OCI-LY7 (cell line): ENCODE measurements at regions of chr7 and their contacts with region 1.

Region 1: GRCh38 chr7:101542527-101543241 is 86.4 kb downstream of the MYL10 start:
- DNase-seq: peak; percentile 76
- H3K4me3 ChIP-seq: no peak overlapping the region
- H3K27ac ChIP-seq: no peak overlapping the region
- H3K4me1 ChIP-seq: no peaks in the 10 kb centered on the region
- CTCF ChIP-seq: peak; percentile 92

Region 2: DNA sequence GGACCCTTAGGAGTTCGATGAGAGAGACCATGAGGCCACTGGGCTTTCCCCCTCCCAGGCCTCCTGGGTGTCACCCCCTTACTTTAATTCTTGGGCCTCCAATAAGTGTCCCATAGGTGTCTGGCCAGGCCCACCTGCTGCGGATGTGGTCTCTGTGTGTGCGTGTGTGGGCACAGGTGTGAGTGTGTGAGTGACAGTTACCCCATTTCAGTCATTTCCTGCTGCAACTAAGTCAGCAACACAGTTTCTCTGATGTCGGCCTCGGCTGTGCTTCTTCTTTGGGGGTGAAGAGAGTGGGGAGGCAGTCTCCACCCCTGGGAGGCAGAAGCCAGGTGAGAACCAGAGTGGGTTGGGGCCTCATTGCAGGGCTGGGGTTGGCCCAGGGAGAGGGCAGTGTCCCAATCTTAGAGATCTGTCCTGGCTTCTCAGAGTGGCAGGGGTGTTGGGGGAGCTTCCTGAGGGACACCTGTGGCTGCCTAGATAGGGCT is 1321.4 kb before region 1 on chr7:
- CTCF ChIA-PET with region 1: no interaction called
- POLR2A ChIA-PET with region 1: no interaction called
- intact Hi-C with region 1: no loop called
- DNase-seq: peak; percentile 98
- H3K4me3 ChIP-seq: peak overlapping the region; percentile 92
- H3K27ac ChIP-seq: peak overlapping the region; percentile 96
- H3K4me1 ChIP-seq: peaks cover 76% of the 10 kb centered on the region
- CTCF ChIP-seq: no peak

Region 3: DNA sequence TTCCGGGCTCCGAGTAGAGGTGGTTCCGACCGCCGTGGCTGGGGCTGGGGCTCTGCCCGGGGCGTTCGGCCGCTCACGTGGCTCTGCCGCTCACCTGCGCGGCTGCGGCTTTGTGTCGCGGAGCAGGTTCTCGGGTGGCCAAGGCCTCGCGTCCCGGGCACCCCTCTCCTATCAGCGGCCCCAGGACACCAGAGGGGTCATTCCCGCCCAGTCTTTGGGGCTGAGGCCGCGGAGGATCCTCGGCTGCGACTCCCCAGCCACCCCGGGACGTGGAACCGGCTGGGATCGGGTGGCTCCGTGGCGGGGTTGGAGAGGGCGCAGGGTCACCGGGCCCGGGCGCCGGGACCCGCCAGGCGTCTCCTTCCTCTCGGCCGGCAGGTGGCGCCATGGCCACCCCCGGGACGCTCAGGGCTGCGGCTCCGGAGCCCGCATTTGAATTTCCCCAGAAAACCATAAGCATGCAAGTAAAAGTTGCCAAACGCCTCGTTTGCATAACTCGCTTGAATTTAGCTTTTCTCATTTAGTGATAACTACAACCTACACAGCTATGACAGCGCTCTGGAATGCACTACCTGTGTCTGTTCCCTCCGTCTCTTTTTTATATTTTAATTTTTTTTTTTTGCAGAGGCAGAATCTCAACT is 178.8 kb before region 1 on chr7:
- CTCF ChIA-PET with region 1: no interaction called
- POLR2A ChIA-PET with region 1: no interaction called
- intact Hi-C with region 1: loop called (anchors 10 kb)
- DNase-seq: peak; percentile 61
- H3K4me3 ChIP-seq: no peak overlapping the region
- H3K27ac ChIP-seq: no peak overlapping the region
- H3K4me1 ChIP-seq: no peaks in the 10 kb centered on the region
- CTCF ChIP-seq: peak; percentile 83

Region 4: GRCh38 chr7:101602484-101603241 is 60.0 kb after region 1 on chr7:
- CTCF ChIA-PET with region 1: no interaction called
- POLR2A ChIA-PET with region 1: interaction called, 3 read pairs
- intact Hi-C with region 1: loop called (anchors 2 kb)
- DNase-seq: peak; percentile 85
- H3K4me3 ChIP-seq: no peak overlapping the region
- H3K27ac ChIP-seq: no peak overlapping the region
- H3K4me1 ChIP-seq: peaks cover 10% of the 10 kb centered on the region
- CTCF ChIP-seq: peak; percentile 98

Region 5: DNA sequence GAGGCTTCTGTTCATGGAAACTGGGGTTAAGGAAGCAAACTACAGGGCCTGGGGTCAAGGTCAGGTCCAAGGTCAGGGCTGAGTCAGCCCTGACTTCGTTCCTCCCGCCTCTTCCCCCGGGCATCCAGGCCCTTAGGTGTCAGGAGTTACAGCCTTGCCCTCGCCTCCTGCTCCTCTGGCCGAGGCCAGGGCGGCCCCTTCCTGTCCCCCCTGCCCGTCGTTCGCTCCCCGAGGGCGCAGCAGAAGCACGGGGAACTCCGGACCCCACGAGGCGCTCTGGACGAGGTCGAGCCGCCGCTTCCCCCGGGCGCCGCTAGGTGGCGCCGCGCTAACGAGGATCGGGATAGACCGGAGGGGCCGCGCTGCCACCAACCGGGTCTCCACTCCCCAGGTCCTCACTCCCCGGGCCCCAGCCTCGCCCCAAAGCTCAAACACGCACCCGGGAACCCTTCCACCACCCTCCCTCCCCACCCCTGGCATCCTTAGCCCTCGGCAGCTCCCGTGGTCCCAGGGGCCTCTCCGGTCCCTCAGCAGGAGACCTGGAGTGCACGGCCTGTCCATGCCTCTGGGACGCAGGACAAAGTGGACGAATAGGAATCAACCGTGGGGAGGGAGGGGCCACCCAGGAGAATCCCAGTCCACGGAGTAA is 145.6 kb after region 1 on chr7:
- CTCF ChIA-PET with region 1: no interaction called
- POLR2A ChIA-PET with region 1: no interaction called
- intact Hi-C with region 1: loop called (anchors 5 kb)
- DNase-seq: peak; percentile 88
- H3K4me3 ChIP-seq: peak overlapping the region; percentile 23
- H3K27ac ChIP-seq: peak overlapping the region; percentile 45
- H3K4me1 ChIP-seq: peaks cover 12% of the 10 kb centered on the region
- CTCF ChIP-seq: peak; percentile 92

Region 6: GRCh38 chr7:102272075-102272917 is 729.6 kb after region 1 on chr7:
- CTCF ChIA-PET with region 1: no interaction called
- POLR2A ChIA-PET with region 1: no interaction called
- intact Hi-C with region 1: loop called (anchors 1 kb)
- DNase-seq: peak; percentile 80
- H3K4me3 ChIP-seq: no peak overlapping the region
- H3K27ac ChIP-seq: no peak overlapping the region
- H3K4me1 ChIP-seq: peaks cover 17% of the 10 kb centered on the region
- CTCF ChIP-seq: peak; percentile 97

Region 7: GRCh38 chr7:102396027-102397019 is 853.6 kb after region 1 on chr7 and contains the start of gene PRKRIP1:
- CTCF ChIA-PET with region 1: no interaction called
- POLR2A ChIA-PET with region 1: no interaction called
- intact Hi-C with region 1: loop called (anchors 10 kb)
- DNase-seq: peak; percentile 100
- H3K4me3 ChIP-seq: peak within 1 kb of the TSS; percentile 84
- H3K27ac ChIP-seq: peak within 1 kb of the TSS; percentile 81
- H3K4me1 ChIP-seq: peaks cover 18% of the 10 kb centered on the region
- CTCF ChIP-seq: no peak
- total RNA-seq, gene PRKRIP1: 47.1 and 60.7 TPM in 2 replicates